GM10248 (cell line): ENCODE measurements at regions of chr16 and their contacts with region 1.

Region 1: GRCh38 chr16:85986931-85987749 is 88.2 kb downstream of the IRF8 start:
- DNase-seq: peak; percentile 80
- CTCF ChIP-seq: peak; percentile 22

Region 2: DNA sequence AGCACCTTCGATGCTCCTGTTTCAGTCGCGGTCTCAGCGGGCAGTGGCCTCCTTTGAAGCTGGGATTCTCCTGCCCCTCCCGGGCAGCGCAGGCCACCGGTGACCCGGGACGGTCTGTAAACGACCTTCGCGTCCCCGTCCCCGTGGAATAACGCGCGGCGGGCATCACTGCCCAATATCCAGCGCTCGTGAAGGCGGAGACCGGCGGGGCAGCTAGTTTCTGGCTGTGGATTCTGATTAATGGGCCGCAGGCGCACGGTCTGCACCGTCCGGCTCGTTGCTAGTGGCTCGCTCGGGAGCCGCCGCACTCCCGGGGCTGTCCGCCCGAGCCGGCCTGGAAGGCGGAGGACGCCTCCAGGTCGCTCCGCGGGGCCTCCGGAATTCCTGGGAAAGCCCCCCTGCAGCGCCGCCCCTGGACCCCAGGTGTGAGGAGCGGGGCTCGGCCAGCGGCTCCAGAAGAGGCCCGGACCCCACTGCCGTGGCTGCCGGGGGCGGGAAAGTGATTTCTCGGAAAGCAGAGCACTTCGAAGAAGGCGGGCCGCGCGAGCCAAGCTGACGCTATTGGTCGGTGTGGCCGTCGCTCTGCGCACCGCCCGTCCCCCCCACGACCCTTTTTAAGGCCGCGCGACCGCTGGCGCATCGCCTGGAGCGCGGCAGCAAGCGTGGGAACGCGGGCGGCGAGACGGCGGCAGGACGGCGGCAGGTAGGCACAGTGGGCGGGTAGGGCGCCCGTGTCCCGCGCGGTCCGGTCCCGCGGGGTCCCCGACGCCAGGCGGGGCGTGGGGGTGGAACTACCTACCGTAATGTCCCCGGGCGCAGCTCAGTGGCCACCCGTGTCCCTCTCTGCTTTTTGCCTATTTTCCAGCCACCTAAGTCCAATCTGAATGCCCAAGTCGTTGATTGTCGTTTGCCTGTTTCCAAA is 88.4 kb before region 1 on chr16 and contains the start of gene IRF8:
- CTCF ChIA-PET with region 1: interaction called, 16 read pairs
- POLR2A ChIA-PET with region 1: interaction called, 7 read pairs
- DNase-seq: peak; percentile 93
- CTCF ChIP-seq: no peak

Region 3: DNA sequence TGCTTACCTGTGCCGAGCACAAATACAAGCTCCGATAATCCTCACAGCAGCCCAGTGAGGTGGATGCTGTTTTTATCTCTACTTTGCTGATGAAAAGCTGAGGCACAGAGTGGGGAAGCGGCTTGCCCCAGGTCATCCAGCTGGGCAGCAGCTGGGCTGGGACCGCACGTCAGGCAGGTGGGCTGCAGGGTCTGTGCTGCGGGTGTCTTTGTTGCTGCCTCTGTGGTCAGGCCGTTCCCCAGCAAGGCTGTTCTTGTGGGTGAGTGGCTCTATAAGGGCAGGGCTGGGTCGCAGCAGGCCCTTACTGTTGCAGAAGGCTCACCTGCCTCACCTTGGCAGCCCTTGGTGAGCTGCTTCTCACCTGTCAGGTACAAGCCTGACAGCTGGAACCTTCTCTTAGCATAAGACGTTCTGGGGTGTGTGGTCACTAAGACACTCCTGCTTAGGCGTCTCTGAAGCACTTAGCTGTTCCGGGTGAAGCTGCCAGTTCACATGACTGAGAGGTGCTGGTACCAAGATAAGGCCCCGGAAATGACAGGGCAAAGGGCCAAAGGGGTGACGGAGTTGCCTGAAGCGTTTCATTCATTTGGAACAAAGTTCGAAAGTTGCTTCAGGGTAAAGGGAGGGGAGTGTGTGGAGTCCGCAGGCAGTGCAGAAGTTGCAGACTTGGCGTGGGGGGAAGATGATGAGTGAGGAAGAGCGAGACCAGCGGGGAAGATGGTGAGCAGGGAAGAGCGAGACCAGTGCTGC is 70.8 kb before region 1 on chr16:
- CTCF ChIA-PET with region 1: interaction called, 27 read pairs
- POLR2A ChIA-PET with region 1: interaction called, 3 read pairs
- DNase-seq: no peak
- CTCF ChIP-seq: no peak

Region 4: GRCh38 chr16:85955566-85955965 is 31.6 kb before region 1 on chr16:
- CTCF ChIA-PET with region 1: interaction called, 10 read pairs
- POLR2A ChIA-PET with region 1: no interaction called
- DNase-seq: peak; percentile 77
- CTCF ChIP-seq: no peak

Region 5: DNA sequence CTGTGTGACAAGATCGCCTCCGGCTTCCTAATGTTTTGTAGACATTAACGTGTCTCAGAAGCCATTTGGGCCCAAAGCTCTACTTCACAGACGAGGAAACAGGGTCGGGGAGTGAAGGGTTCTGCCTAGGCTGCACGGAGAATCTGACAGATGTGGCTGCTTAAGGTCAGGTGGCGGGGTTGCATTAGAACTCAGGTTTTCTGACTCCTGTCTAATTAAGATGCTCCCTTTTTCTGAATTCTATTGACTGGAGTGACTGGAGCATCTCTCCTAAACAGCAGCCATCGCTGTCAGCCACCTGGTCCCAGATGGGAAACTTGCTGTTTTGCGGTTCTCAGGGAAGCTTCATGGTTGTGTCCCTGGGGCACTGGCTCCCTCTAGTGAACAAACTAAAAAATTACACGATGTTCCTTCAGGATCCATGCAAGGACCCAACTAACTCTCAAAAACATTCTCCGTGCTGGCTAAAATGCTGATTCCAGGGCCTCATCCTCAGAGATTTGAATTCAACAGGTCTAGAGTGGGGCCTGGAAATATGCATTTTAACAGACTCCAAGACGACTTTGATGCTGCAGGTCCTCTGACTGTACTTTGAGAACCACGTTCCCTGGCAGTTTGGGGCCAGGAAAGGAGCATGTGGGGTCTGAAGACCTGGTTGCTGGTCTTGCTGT is 29.2 kb after region 1 on chr16:
- CTCF ChIA-PET with region 1: interaction called, 10 read pairs
- POLR2A ChIA-PET with region 1: no interaction called
- DNase-seq: peak; percentile 76
- CTCF ChIP-seq: peak; percentile 67